OCI-LY7 (cell line): ENCODE measurements at regions of chr22 and their contacts with region 1.

Region 1: GRCh38 chr22:37077884-37078485 is 26.4 kb downstream of the KCTD17 start:
- DNase-seq: peak; percentile 68
- H3K4me3 ChIP-seq: no peak overlapping the region
- H3K27ac ChIP-seq: no peak overlapping the region
- H3K4me1 ChIP-seq: peaks cover 5% of the 10 kb centered on the region
- CTCF ChIP-seq: peak; percentile 100

Region 2: GRCh38 chr22:37199103-37199759 is 121.2 kb after region 1 on chr22:
- CTCF ChIA-PET with region 1: no interaction called
- POLR2A ChIA-PET with region 1: no interaction called
- intact Hi-C with region 1: loop called (anchors 2 kb)
- DNase-seq: peak; percentile 99
- H3K4me3 ChIP-seq: peak overlapping the region; percentile 80
- H3K27ac ChIP-seq: peak overlapping the region; percentile 86
- H3K4me1 ChIP-seq: peaks cover 33% of the 10 kb centered on the region
- CTCF ChIP-seq: peak; percentile 83

Region 3: DNA sequence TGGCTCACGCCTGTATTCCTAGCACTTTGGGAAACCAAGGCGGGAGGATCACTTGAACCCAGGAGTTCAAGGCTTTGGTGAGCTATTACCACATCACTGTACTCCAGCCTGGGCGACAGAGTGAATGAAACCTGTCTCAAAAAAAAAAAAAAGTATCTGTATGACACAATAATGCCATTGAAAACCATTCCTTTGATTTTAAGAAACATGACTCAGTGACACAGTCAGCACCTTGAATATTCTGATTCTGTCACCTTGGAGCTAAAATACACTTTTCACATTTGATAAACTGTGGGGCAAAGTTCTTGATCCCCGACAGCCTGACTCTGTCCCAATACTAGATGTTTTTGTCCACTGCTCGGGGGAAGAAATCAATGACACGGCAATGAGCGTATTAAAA is 366.0 kb after region 1 on chr22:
- CTCF ChIA-PET with region 1: no interaction called
- POLR2A ChIA-PET with region 1: no interaction called
- intact Hi-C with region 1: no loop called
- DNase-seq: no peak
- H3K4me3 ChIP-seq: no peak overlapping the region
- H3K27ac ChIP-seq: no peak overlapping the region
- H3K4me1 ChIP-seq: peaks cover 4% of the 10 kb centered on the region
- CTCF ChIP-seq: no peak

Region 4: DNA sequence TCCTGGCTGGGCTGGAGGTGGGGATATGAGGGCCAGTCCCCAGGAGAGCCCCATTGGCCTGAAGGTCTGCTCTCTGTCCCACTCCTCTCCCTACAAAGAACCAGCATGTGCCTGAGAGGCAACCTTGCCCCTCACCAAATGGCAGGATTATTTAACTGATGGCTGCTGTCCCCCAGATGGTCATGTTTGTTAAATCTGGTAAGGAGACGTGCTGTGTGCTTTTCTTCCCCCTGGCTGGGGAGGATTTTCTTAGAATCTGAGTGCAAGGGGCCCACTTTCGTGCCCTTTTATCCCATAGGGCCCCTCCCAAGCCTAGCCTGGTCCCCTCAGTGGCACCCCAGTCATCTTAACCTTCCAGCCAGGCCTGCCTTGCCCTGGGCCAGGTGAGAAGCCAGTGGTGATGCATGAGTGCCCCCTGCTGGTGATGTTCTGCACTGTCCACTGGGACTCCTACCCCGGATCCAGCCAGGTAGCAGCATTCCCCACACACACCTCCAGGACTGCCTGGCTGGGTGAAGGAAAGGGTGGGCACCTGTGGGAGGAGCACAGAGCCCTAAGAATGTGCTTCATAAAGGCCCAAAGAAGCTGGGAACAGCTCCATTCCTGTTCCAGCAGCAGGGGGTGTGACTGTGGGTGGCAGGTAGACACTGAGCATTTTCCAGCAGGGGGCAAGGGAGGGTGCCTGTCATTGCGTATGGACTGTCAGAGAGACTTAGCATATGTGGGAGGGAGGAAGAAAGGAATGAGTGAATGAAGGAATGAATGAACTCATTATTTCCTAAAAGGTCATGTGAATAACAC is 379.3 kb after region 1 on chr22:
- CTCF ChIA-PET with region 1: no interaction called
- POLR2A ChIA-PET with region 1: no interaction called
- intact Hi-C with region 1: loop called (anchors 5 kb)
- DNase-seq: peak; percentile 78
- H3K4me3 ChIP-seq: no peak overlapping the region
- H3K27ac ChIP-seq: no peak overlapping the region
- H3K4me1 ChIP-seq: peaks cover 9% of the 10 kb centered on the region
- CTCF ChIP-seq: peak; percentile 99